ENCODE measurements at regions of chr15 and their contacts with region 1.

Region 1: GRCh38 chr15:51132384-51133139 is 37.9 kb upstream of the TNFAIP8L3 start:
- DNase-seq: peak; percentile 45
- H3K4me3 ChIP-seq: peak overlapping the region in 1 of 2 experiments; percentile 47; a peak in 1 of 4 replicates
- H3K27ac ChIP-seq: peak overlapping the region in 1 of 2 experiments; percentile 48; a peak in 2 of 4 replicates
- H3K4me1 ChIP-seq: peaks cover 3 to 4% of the 10 kb centered on the region in 2 experiments; a peak in 2 of 4 replicates
- H3K27me3 ChIP-seq: no peaks in the 10 kb centered on the region
- CTCF ChIP-seq: peak; percentile 97
- EP300 ChIP-seq: no peak
- RAD21 ChIP-seq: peak; percentile 65

Region 2: DNA sequence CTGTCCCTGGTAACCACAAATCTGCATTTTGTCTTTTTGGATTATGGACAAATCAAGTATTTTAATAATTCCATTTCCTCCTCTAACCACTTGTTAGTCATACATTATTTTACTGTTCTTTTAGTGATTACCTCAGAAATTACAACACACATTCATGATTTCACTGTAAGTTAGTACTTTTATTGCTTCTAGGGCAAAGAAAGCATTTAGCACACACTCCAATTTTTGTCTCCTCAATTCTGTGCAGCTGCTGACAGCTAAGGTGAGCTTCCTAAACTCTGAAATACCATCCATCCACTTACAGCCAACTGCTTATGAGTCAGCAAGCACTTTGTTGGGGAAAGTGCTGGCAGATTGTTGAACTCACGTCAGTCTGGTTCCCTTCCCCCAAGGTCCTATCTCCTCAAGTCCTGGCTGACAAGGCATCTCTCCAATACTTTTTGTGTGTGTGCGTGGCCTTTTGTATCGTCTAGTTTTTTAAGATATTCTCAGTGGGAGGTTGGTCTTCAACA is 11.5 kb after region 1 on chr15:
- CTCF ChIA-PET with region 1: interaction called, 10 read pairs
- POLR2A ChIA-PET with region 1: no interaction called
- DNase-seq: no peak
- H3K4me3 ChIP-seq: no peak overlapping the region
- H3K27ac ChIP-seq: no peak overlapping the region
- H3K4me1 ChIP-seq: 0 out of 4 replicates have a peak, but pooled peaks cover 0 to 4% of the 10 kb centered on the region in 2 experiments
- H3K27me3 ChIP-seq: no peaks in the 10 kb centered on the region; the same call in 1 of the 2 replicates
- CTCF ChIP-seq: no peak
- EP300 ChIP-seq: no peak
- RAD21 ChIP-seq: no peak

Region 3: GRCh38 chr15:51155016-51155580 is 22.5 kb after region 1 on chr15:
- CTCF ChIA-PET with region 1: interaction called, 10 read pairs
- POLR2A ChIA-PET with region 1: no interaction called
- DNase-seq: no peak
- H3K4me3 ChIP-seq: no peak overlapping the region
- H3K27ac ChIP-seq: no peak overlapping the region
- H3K4me1 ChIP-seq: no peaks in the 10 kb centered on the region
- H3K27me3 ChIP-seq: peaks cover 13% of the 10 kb centered on the region; the same call in 1 of the 2 replicates
- CTCF ChIP-seq: no peak
- EP300 ChIP-seq: no peak
- RAD21 ChIP-seq: no peak

Region 4: DNA sequence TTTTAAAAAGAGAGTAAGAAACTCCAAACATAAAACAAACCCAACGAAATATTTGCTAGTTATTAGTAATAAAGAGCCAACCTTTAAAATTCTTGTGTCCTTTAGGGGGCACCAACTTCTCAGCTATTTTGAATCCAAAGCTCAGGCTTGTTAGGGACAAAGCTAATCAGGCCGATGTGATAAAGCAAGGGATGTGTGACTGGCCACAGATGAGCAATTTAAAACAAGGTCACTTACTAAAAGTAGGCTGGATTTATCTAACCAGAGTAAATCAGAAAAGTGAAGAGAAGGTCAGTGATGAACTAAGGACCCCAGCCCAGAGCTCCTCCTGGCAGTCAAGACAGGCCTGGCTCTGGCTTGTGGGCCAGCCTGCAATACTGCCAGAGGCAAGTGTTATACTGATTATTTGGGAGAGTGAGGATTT is 97.4 kb after region 1 on chr15:
- CTCF ChIA-PET with region 1: no interaction called
- POLR2A ChIA-PET with region 1: no interaction called
- DNase-seq: peak; percentile 55
- H3K4me3 ChIP-seq: no peak overlapping the region; a peak in 1 of 4 replicates
- H3K27ac ChIP-seq: no peak overlapping the region; a peak in 1 of 4 replicates
- H3K4me1 ChIP-seq: peaks cover 3 to 11% of the 10 kb centered on the region in 2 experiments; a peak in 2 of 4 replicates
- H3K27me3 ChIP-seq: no peaks in the 10 kb centered on the region; the same call in 1 of the 2 replicates
- CTCF ChIP-seq: peak; percentile 55
- EP300 ChIP-seq: no peak
- RAD21 ChIP-seq: peak; percentile 88

Region 5: GRCh38 chr15:51248088-51248487 is 115.5 kb after region 1 on chr15:
- CTCF ChIA-PET with region 1: no interaction called
- POLR2A ChIA-PET with region 1: no interaction called
- DNase-seq: no peak
- H3K4me3 ChIP-seq: no peak overlapping the region
- H3K27ac ChIP-seq: no peak overlapping the region
- H3K4me1 ChIP-seq: peaks cover 0 to 2% of the 10 kb centered on the region in 2 experiments; a peak in 1 of 4 replicates
- H3K27me3 ChIP-seq: no peaks in the 10 kb centered on the region; the same call in 1 of the 2 replicates
- CTCF ChIP-seq: no peak
- EP300 ChIP-seq: no peak
- RAD21 ChIP-seq: no peak

Measured in SK-N-SH (cell line).